Caco-2 (cell line): ENCODE measurements at regions of chr7 and their contacts with region 1.

Region 1: DNA sequence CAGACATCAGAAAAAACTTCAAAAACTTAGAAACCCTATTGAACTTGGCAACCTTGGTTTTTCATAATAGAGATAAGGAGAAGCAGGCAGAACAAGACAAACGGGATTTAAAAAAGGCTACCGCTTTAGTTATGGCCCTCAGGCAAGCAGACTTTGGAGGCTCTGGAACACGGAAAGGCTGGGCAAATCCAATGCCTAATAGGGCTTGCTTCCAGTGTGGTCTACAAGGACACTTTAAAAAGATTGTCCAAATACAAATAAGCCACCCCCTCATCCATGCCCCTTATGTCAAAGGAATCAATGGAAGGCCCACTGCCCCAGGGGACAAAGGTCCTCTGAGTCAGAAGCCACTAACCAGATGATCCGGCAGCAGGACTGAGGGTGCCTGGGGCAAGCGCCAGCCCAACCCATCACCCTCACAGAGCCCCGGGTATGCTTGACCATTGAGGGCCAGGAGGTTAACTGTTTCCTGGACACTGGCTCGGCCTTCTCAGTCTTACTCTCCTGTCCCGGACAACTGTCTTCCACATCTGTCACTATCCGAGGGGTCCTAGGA is 115.3 kb downstream of the NRCAM start:
- DNase-seq: peak; percentile 93 to 97
- H3K4me3 ChIP-seq: no peak overlapping the region
- H3K4me3 Mint-ChIP-seq: peak overlapping the region; percentile 58
- H3K27ac Mint-ChIP-seq: peak overlapping the region; percentile 81
- H3K4me1 ChIP-seq: peaks cover 38% of the 10 kb centered on the region
- H3K4me1 Mint-ChIP-seq: peaks cover 40% of the 10 kb centered on the region
- H3K27me3 ChIP-seq: no peaks in the 10 kb centered on the region
- H3K27me3 Mint-ChIP-seq: no peaks in the 10 kb centered on the region
- CTCF ChIP-seq: no peak

Region 2: DNA sequence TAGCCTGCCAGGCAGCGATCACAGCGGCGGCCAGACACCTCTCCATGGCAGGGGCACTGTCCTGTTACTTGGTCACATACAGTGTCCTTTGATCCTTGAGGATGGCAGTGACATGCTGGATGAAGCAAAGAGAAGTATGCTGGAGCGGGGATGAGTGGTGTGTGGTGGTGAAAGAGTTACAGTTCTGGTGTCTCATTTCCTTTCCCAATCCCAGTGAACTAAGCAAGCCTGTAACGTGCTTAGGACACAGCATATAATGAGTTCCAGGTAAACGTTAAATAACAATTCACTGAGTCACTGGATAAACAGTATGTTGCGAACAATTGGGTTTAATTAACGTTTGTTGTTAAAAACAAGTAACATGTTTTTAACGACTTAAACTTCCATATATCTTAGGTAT is 274.4 kb before region 1 on chr7:
- CTCF ChIA-PET with region 1: no interaction called
- POLR2A ChIA-PET with region 1: no interaction called
- intact Hi-C with region 1: no loop called
- DNase-seq: no peak
- H3K4me3 ChIP-seq: no peak overlapping the region
- H3K4me3 Mint-ChIP-seq: no peak overlapping the region
- H3K27ac Mint-ChIP-seq: no peak overlapping the region
- H3K4me1 ChIP-seq: peaks cover 5% of the 10 kb centered on the region
- H3K4me1 Mint-ChIP-seq: no peaks in the 10 kb centered on the region
- H3K27me3 ChIP-seq: no peaks in the 10 kb centered on the region
- H3K27me3 Mint-ChIP-seq: no peaks in the 10 kb centered on the region
- CTCF ChIP-seq: no peak

Region 3: GRCh38 chr7:108083980-108084379 is 257.0 kb before region 1 on chr7:
- CTCF ChIA-PET with region 1: no interaction called
- POLR2A ChIA-PET with region 1: no interaction called
- intact Hi-C with region 1: no loop called
- DNase-seq: no peak
- H3K4me3 ChIP-seq: no peak overlapping the region
- H3K4me3 Mint-ChIP-seq: no peak overlapping the region
- H3K27ac Mint-ChIP-seq: no peak overlapping the region
- H3K4me1 ChIP-seq: peaks cover 30% of the 10 kb centered on the region
- H3K4me1 Mint-ChIP-seq: peaks cover 49% of the 10 kb centered on the region
- H3K27me3 ChIP-seq: no peaks in the 10 kb centered on the region
- H3K27me3 Mint-ChIP-seq: no peaks in the 10 kb centered on the region
- CTCF ChIP-seq: no peak

Region 4: GRCh38 chr7:108235451-108236061 is 105.4 kb before region 1 on chr7:
- CTCF ChIA-PET with region 1: no interaction called
- POLR2A ChIA-PET with region 1: no interaction called
- intact Hi-C with region 1: loop called (anchors 1 kb)
- DNase-seq: peak; percentile 78 to 89
- H3K4me3 ChIP-seq: no peak overlapping the region
- H3K4me3 Mint-ChIP-seq: peak overlapping the region; percentile 40
- H3K27ac Mint-ChIP-seq: peak overlapping the region; percentile 81
- H3K4me1 ChIP-seq: peaks cover 59% of the 10 kb centered on the region
- H3K4me1 Mint-ChIP-seq: peaks cover 39% of the 10 kb centered on the region
- H3K27me3 ChIP-seq: no peaks in the 10 kb centered on the region
- H3K27me3 Mint-ChIP-seq: no peaks in the 10 kb centered on the region
- CTCF ChIP-seq: no peak

Region 5: GRCh38 chr7:108294595-108294994 is 46.3 kb before region 1 on chr7:
- CTCF ChIA-PET with region 1: no interaction called
- POLR2A ChIA-PET with region 1: no interaction called
- intact Hi-C with region 1: loop called (anchors 2 kb)
- DNase-seq: no peak
- H3K4me3 ChIP-seq: no peak overlapping the region
- H3K4me3 Mint-ChIP-seq: no peak overlapping the region
- H3K27ac Mint-ChIP-seq: no peak overlapping the region
- H3K4me1 ChIP-seq: peaks cover 36% of the 10 kb centered on the region
- H3K4me1 Mint-ChIP-seq: peaks cover 37% of the 10 kb centered on the region
- H3K27me3 ChIP-seq: no peaks in the 10 kb centered on the region
- H3K27me3 Mint-ChIP-seq: no peaks in the 10 kb centered on the region
- CTCF ChIP-seq: no peak

Region 6: DNA sequence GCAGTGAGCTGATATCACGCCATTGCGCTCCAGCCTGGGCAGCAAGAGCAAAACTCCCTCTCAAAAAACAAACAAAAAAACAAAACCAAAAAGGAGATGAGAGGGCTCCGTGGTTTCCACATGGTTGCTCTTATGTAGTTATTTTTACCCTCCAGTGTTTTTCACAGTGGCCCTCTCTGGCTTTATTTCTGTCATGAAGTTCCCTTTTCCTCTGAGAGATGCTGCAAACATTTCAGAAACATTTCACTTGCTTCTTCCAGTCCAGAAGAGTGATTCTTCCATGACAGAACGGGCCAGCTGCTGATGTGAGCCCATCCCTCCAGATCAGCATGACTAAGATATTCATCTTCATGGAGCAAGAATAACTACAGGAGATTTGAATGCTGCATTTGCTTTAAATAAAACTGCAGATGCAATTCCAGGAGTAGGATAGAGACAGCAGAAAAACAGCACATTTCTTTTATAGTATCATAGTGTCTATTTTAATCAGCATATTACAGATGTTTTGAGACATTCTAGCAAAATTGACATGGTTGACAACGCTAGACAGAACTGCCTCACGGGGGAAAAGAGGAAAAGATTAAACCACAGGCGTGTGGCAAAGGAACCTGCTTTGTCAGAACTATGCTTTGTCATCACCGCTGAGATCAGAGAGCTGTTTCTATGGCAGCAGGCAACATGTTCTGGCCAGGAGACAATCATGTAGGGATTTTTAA is 75.0 kb after region 1 on chr7:
- CTCF ChIA-PET with region 1: no interaction called
- POLR2A ChIA-PET with region 1: no interaction called
- intact Hi-C with region 1: no loop called
- DNase-seq: no peak
- H3K4me3 ChIP-seq: no peak overlapping the region
- H3K4me3 Mint-ChIP-seq: no peak overlapping the region
- H3K27ac Mint-ChIP-seq: no peak overlapping the region
- H3K4me1 ChIP-seq: no peaks in the 10 kb centered on the region
- H3K4me1 Mint-ChIP-seq: peaks cover 13% of the 10 kb centered on the region
- H3K27me3 ChIP-seq: no peaks in the 10 kb centered on the region
- H3K27me3 Mint-ChIP-seq: no peaks in the 10 kb centered on the region
- CTCF ChIP-seq: no peak